ENCODE measurements at regions of chr6 and their contacts with region 1.

Region 1: GRCh38 chr6:43070028-43070632 is 6.0 kb upstream of the PTK7 start:
- DNase-seq: no peak
- H3K4me3 ChIP-seq: no peak overlapping the region
- H3K27ac ChIP-seq: no peak overlapping the region
- H3K4me1 ChIP-seq: peaks cover 5% of the 10 kb centered on the region
- H3K27me3 ChIP-seq: no peaks in the 10 kb centered on the region
- CTCF ChIP-seq: peak in 2 of 3 experiments; percentile 8 to 55
- POLR2A ChIP-seq: no peak

Region 2: GRCh38 chr6:43129434-43130194 is 59.5 kb after region 1 on chr6:
- intact Hi-C with region 1: loop called (anchors 10 kb)
- DNase-seq: peak; percentile 61
- H3K4me3 ChIP-seq: no peak overlapping the region
- H3K27ac ChIP-seq: no peak overlapping the region
- H3K4me1 ChIP-seq: peaks cover 40% of the 10 kb centered on the region
- H3K27me3 ChIP-seq: no peaks in the 10 kb centered on the region
- CTCF ChIP-seq: peak in 2 of 3 experiments; percentile 2 to 31
- POLR2A ChIP-seq: no peak